Left ventricle myocardium inferior (tissue), 1 donor: ENCODE measurements at regions of chr9 and their contacts with region 1.

Region 1: GRCh38 chr9:87812375-87813118 is 70.1 kb upstream of the SPATA31E1 start:
- DNase-seq: no peak
- H3K4me3 ChIP-seq: no peak overlapping the region
- H3K27ac ChIP-seq: no peak overlapping the region
- H3K4me1 ChIP-seq: peaks cover 8% of the 10 kb centered on the region
- H3K27me3 ChIP-seq: peaks cover 41% of the 10 kb centered on the region
- CTCF ChIP-seq: peak; percentile 96

Region 2: DNA sequence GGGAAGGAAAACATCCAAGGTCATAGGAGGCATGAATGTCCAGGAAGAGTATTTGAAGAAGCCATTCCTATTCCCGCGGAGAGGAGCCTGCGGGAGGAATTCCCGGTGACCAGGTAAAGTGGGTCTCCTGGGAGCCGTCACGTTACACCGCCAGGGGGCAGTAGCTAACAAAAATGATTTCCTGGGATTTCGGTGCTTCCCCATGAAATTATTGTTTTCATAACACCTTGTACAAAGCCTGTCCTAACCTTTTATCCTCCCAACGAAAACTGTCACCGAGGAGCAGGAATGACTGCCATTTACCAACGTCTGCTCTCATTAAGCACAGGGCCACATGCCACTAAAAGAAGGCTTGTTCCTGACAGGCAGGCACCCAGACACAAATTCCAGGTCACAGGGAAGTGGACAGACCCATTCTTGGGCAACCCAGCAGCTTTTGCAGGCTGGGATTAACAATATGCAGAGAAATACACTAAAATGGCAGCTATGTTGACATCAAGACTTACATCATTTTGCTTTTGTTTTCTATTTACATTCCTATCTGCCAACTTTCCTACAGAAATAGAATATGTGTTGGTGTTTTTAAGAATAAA is 127.8 kb before region 1 on chr9:
- intact Hi-C with region 1: loop called (anchors 2 kb)
- DNase-seq: no peak
- H3K4me3 ChIP-seq: no peak overlapping the region
- H3K27ac ChIP-seq: no peak overlapping the region
- H3K4me1 ChIP-seq: peaks cover 9% of the 10 kb centered on the region
- H3K27me3 ChIP-seq: no peaks in the 10 kb centered on the region
- CTCF ChIP-seq: peak; percentile 84

Region 3: DNA sequence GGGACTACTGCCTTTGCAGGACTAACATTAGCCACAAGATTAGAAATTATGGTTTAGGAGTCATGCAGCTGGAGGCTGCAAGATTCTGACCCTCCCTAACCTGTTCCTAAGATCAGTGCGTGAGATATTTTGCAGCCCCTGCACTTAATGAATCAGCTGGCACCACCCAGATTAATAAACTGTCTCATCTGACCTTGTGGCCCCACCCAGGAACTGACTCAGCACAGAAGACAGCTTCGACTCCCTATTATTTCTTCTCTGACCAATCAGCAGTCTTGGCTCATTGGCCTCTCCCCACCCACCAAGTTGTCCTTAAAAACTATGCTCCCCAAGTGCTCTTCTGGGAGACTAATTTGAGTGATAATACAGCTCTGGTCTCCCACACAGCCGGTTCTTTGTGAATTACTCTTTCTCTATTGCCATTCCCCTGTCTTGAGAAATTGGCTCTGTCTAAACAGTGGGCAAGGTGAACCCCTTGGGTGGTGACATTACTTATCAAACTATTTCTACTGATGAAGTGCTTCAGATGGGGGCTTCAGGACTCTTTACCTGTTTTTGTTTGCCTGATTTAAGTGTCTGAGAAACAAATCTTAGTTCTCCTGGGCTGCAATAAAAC is 69.6 kb before region 1 on chr9:
- intact Hi-C with region 1: no loop called
- DNase-seq: no peak
- H3K4me3 ChIP-seq: no peak overlapping the region
- H3K27ac ChIP-seq: no peak overlapping the region
- H3K4me1 ChIP-seq: no peaks in the 10 kb centered on the region
- H3K27me3 ChIP-seq: peaks cover 28% of the 10 kb centered on the region
- CTCF ChIP-seq: no peak